ENCODE measurements at regions of chr1 and their contacts with region 1.

Region 1: GRCh38 chr1:1890506-1891348 is at the start of gene GNB1:
- DNase-seq: peak; percentile 95
- total RNA-seq, gene GNB1: 183 TPM

Region 2: GRCh38 chr1:1777950-1778662 is 112.6 kb before region 1 on chr1 and contains the start of gene NADK:
- intact Hi-C with region 1: loop called (anchors 5 kb)
- DNase-seq: no peak
- total RNA-seq, gene NADK: 31.3 TPM

Region 3: GRCh38 chr1:1858382-1859086 is 32.2 kb before region 1 on chr1:
- intact Hi-C with region 1: loop called (anchors 2 kb)
- DNase-seq: peak; percentile 84

Region 4: GRCh38 chr1:2115681-2116341 is 225.1 kb after region 1 on chr1:
- intact Hi-C with region 1: no loop called
- DNase-seq: no peak